Activated naive CD4-positive, alpha-beta T cell treated with anti-CD3 and anti-CD28 coated beads for 36 hours (primary cell): ENCODE measurements at regions of chr6 and their contacts with region 1.

Region 1: DNA sequence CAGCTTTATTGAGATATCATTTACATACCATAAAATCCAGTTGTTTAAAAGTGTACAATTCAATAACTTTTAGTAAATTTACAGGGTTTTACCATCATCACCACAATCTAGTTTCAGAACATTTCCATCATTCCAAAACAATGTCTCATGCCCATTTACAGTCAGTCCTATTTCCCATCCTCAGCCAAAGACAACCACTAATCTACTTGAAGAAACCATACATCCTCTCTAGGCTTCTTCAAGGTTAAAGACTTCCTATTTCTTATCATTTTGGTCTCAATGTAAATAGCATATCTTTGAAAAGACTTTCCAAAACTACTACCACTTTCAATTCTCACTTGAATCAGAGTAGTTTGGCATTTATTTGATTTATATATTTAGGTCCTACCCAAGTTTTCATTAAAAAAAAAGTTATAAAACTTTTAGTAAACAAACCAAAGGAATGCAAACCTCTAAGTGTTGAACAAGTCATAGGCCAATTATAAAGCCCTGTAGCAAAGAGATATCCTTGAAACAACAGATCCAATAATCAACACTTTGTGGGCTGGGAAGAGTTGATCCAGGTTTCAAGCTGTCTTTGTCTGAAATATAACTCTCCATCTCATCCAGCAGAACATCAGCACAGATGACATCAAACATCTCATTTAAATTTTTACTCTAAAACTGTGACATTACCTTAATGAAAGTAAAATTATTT is 211.3 kb upstream of the RUNX2 start:
- DNase-seq: no peak
- H3K4me3 Mint-ChIP-seq: no peak overlapping the region
- H3K27ac Mint-ChIP-seq: peak overlapping the region; percentile 52
- H3K4me1 Mint-ChIP-seq: peaks cover 24% of the 10 kb centered on the region
- H3K27me3 Mint-ChIP-seq: no peaks in the 10 kb centered on the region

Region 2: GRCh38 chr6:45156075-45156474 is 39.2 kb after region 1 on chr6:
- CTCF ChIA-PET with region 1: no interaction called
- intact Hi-C with region 1: loop called (anchors 2 kb)
- DNase-seq: peak; percentile 54
- H3K4me3 Mint-ChIP-seq: no peak overlapping the region
- H3K27ac Mint-ChIP-seq: peak overlapping the region; percentile 59
- H3K4me1 Mint-ChIP-seq: peaks cover 28% of the 10 kb centered on the region
- H3K27me3 Mint-ChIP-seq: no peaks in the 10 kb centered on the region